SK-N-SH (cell line): ENCODE measurements at regions of chr6 and their contacts with region 1.

Region 1: DNA sequence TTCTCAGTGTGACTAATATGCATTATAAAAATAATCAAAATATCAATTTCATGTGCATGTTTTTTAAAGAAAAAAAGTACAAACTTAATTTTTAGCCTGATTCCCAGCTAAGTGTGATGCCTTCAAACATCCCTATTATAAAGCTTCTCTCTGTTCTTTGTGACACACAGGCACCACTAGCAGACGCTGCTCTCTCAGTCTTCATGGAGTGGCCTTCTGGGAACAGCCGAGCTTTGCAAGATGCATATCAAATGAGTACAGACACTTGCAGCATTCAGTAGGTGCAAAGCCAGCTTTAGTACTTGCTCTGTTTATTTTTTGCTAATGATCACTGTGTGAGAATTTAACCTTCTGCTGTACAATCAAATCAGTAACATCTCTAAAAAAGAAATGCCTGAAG is 340.0 kb downstream of the ADGRB3 start:
- DNase-seq: peak; percentile 38
- H3K4me3 ChIP-seq: no peak overlapping the region; a peak in 1 of 4 replicates
- H3K27ac ChIP-seq: no peak overlapping the region; a peak in 1 of 4 replicates
- H3K4me1 ChIP-seq: peaks cover 0 to 3% of the 10 kb centered on the region in 2 experiments; a peak in 2 of 4 replicates
- H3K27me3 ChIP-seq: no peaks in the 10 kb centered on the region
- CTCF ChIP-seq: peak; percentile 28; the same call in 1 of the 2 replicates
- EP300 ChIP-seq: no peak
- RAD21 ChIP-seq: peak; percentile 83

Region 2: DNA sequence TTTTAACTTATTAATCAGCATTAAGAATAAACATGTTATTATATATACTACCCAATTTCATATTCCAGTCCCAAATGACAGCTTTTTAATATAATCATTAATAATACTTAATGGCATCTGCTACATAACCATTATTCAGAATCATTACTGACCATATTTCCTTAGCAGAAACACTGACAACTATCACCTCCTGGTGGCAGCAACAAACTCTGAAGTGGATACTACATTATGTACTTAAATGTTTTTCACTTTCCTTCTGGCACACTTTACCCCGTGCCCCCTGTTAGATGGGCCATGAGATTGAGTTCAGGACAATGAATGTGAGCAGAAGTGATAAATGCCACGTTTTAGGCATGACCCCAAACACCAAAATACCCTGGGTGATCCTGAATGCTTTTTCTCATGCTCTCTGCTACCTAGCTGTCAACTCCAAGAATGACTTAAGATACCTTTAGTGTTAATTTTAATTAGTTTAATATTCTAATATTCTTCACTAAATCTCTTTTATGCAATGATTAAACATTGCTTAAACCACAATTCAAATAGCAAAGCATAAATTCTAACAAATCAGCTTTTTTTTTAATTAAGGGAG is 744.6 kb after region 1 on chr6:
- CTCF ChIA-PET with region 1: interaction called, 13 read pairs
- POLR2A ChIA-PET with region 1: no interaction called
- DNase-seq: peak; percentile 22
- H3K4me3 ChIP-seq: no peak overlapping the region
- H3K27ac ChIP-seq: no peak overlapping the region
- H3K4me1 ChIP-seq: no peaks in the 10 kb centered on the region
- H3K27me3 ChIP-seq: no peaks in the 10 kb centered on the region
- CTCF ChIP-seq: peak; percentile 60
- EP300 ChIP-seq: no peak
- RAD21 ChIP-seq: peak; percentile 76

Region 3: GRCh38 chr6:69732640-69733039 is 757.6 kb after region 1 on chr6:
- CTCF ChIA-PET with region 1: interaction called, 14 read pairs
- POLR2A ChIA-PET with region 1: no interaction called
- DNase-seq: no peak
- H3K4me3 ChIP-seq: no peak overlapping the region
- H3K27ac ChIP-seq: no peak overlapping the region
- H3K4me1 ChIP-seq: no peaks in the 10 kb centered on the region
- H3K27me3 ChIP-seq: no peaks in the 10 kb centered on the region
- CTCF ChIP-seq: peak; percentile 50
- EP300 ChIP-seq: no peak
- RAD21 ChIP-seq: peak; percentile 56